ENCODE measurements at regions of chr1 and their contacts with region 1.

Region 1: DNA sequence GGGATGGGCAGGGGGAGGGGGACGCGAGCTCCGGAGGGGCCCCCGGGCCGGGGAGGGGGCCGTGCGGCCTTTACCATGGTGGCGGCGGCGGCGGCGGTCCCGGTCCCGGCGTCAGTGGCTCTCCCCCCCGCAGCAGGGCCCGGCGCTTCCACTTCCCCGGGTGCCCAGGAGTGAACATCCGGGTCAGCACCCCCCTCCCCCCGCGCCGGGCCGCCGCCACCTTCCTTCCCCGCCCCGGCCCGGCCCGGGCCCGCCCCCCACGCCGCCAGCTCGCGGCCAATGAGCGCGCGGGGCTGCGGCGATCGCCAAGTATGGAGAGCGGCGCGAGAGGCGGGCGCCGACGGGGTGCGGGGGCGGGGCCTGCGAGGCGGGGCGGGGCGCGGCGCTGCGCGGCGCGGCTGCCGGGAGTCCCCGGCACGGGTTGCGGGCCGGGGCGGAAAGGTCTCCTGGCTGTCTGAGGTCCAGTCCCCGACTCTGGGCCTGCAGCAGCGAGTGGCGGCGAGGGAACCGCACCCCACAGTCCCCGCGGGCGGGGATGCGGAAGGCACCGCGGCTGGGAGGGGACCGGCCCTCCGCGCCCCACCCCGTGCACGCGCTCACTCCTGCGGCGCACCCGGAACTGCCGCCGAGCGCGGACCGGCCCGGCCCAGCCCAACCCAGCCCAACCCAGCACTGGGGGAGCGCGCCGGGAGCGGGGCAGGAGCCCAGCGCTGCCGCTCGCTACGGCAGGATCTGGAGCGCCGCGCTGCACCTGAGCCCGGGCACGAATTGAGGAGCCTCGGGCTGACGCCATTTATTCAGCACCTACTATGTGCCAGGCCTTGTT is at the start of gene CAPZB:
- DNase-seq: peak; percentile 90
- H3K4me3 Mint-ChIP-seq: peak within 1 kb of the TSS; percentile 94
- H3K27ac Mint-ChIP-seq: peak within 1 kb of the TSS; percentile 88
- H3K4me1 Mint-ChIP-seq: peaks cover 63% of the 10 kb centered on the region
- H3K27me3 Mint-ChIP-seq: no peaks in the 10 kb centered on the region
- total RNA-seq, gene CAPZB: 317 and 323 TPM in 2 replicates

Region 2: GRCh38 chr1:19101244-19101643 is 384.3 kb before region 1 on chr1:
- intact Hi-C with region 1: no loop called
- DNase-seq: no peak
- H3K4me3 Mint-ChIP-seq: no peak overlapping the region
- H3K27ac Mint-ChIP-seq: no peak overlapping the region
- H3K4me1 Mint-ChIP-seq: peaks cover 5% of the 10 kb centered on the region
- H3K27me3 Mint-ChIP-seq: no peaks in the 10 kb centered on the region

Region 3: GRCh38 chr1:19251305-19252196 is 234.0 kb before region 1 on chr1 and contains the starts of genes EMC1 and MRTO4:
- intact Hi-C with region 1: loop called (anchors 2 kb)
- DNase-seq: peak; percentile 87
- H3K4me3 Mint-ChIP-seq: peak within 1 kb of the TSS; percentile 99
- H3K27ac Mint-ChIP-seq: peak within 1 kb of the TSS; percentile 98
- H3K4me1 Mint-ChIP-seq: peaks cover 22% of the 10 kb centered on the region
- H3K27me3 Mint-ChIP-seq: no peaks in the 10 kb centered on the region
- total RNA-seq, gene EMC1: 63.9 and 78.3 TPM in 2 replicates
- total RNA-seq, gene MRTO4: 134 and 137 TPM in 2 replicates

Region 4: DNA sequence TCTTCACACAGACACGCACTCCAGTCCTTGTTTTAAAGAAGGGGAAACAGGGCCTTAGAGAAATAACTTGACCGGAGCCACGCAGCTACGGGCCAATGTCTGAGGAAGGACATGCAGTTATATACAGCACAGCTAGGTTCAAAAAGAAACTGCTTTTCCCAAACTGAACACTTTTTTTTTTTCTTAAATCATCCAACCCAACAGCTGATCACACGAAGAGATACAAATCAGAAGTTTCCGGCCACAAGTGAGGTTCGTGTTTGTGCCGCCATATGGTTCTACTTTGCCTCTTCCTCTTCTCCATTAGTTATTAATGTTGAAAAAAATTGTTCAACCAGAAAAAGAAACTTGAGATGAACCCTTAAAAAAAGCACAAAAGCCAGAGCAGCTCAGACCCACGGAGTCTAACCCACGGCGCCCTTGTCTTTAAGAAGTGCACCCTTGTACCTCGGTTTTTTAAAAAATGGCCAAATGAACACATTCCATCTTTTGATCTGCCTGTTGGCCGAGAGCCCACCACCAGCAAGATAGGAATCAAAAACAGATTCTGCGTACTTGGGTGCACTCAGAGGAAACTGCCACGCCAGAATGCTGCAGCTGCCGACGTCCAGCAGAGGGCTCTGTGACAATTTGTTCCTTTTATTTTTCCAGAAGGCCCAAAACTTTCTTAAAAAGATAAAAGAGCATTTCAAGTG is 94.5 kb before region 1 on chr1:
- intact Hi-C with region 1: loop called (anchors 1 kb)
- DNase-seq: peak; percentile 46
- H3K4me3 Mint-ChIP-seq: peak overlapping the region; percentile 76
- H3K27ac Mint-ChIP-seq: peak overlapping the region; percentile 88
- H3K4me1 Mint-ChIP-seq: peaks cover 52% of the 10 kb centered on the region
- H3K27me3 Mint-ChIP-seq: no peaks in the 10 kb centered on the region

Region 5: GRCh38 chr1:19468397-19468956 is 17.1 kb before region 1 on chr1:
- intact Hi-C with region 1: loop called (anchors 2 kb)
- DNase-seq: peak; percentile 48
- H3K4me3 Mint-ChIP-seq: peak overlapping the region; percentile 45
- H3K27ac Mint-ChIP-seq: peak overlapping the region; percentile 88
- H3K4me1 Mint-ChIP-seq: peaks cover 88% of the 10 kb centered on the region
- H3K27me3 Mint-ChIP-seq: no peaks in the 10 kb centered on the region

Region 6: DNA sequence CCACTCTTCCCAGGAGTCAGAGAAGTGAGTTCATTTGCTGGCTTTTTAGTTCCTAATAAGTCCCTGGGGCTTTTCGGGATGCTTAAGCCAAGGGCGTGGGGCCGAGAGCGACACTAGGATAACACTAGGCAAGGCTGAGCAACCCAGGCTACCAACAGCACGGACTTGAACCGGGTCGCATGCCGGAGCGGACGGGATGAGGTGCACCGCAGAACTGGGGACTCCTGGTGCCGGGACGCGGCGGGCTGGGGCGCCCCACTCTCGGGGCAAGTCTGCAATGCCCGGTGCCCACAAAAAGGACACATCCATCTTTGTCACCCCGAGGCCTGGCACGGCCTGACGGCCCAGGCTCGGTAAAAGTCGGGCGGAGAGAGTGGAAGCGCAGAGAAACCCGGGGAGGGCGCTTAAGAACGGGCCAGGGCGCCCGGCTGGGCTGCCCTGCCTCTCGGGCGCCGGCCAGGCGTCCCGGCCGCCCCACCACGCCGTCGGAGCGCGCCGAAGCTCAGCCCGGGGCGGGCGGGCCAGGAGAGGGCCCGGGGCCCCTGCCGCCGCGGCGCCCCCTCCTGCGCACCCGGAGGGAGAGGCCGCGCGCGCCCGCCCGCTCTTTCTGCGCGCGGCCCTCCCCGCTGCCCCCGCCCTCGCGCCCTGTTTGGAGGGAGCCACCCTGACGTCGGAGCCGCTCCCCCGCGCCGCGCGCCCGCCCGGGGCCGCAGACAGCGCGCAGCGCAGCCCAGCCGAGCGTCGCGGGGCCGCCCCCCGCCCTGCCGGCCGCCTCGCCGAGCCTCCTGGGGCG is 158.2 kb after region 1 on chr1 and contains the start of gene NBL1:
- intact Hi-C with region 1: loop called (anchors 1 kb)
- DNase-seq: peak; percentile 75
- H3K4me3 Mint-ChIP-seq: peak within 1 kb of the TSS; percentile 94
- H3K27ac Mint-ChIP-seq: peak within 1 kb of the TSS; percentile 95
- H3K4me1 Mint-ChIP-seq: peaks cover 33% of the 10 kb centered on the region
- H3K27me3 Mint-ChIP-seq: peaks cover 24% of the 10 kb centered on the region
- total RNA-seq, gene NBL1: 53.0 and 55.5 TPM in 2 replicates